Naive thymus-derived CD4-positive, alpha-beta T cell (primary cell): ENCODE measurements at regions of chr1 and their contacts with region 1.

Region 1: GRCh38 chr1:77683160-77684148 is 996 bp upstream of the ZZZ3 start:
- DNase-seq: peak; percentile 83 to 94 (median 92)
- ATAC-seq: peak; percentile 86
- H3K4me3 ChIP-seq: peak overlapping the region; percentile 91
- H3K4me3 Mint-ChIP-seq: peak overlapping the region; percentile 80 to 97 (median 91)
- H3K27ac ChIP-seq: peak overlapping the region; percentile 92
- H3K27ac Mint-ChIP-seq: peak overlapping the region; percentile 89 to 100 (median 97)
- H3K4me1 ChIP-seq: peaks cover 15 to 33% of the 10 kb centered on the region in 2 donors
- H3K4me1 Mint-ChIP-seq: peaks cover 20 to 51% (median 40%) of the 10 kb centered on the region in 7 donors
- H3K27me3 ChIP-seq: no peaks in the 10 kb centered on the region
- H3K27me3 Mint-ChIP-seq: no peaks in the 10 kb centered on the region

Region 2: DNA sequence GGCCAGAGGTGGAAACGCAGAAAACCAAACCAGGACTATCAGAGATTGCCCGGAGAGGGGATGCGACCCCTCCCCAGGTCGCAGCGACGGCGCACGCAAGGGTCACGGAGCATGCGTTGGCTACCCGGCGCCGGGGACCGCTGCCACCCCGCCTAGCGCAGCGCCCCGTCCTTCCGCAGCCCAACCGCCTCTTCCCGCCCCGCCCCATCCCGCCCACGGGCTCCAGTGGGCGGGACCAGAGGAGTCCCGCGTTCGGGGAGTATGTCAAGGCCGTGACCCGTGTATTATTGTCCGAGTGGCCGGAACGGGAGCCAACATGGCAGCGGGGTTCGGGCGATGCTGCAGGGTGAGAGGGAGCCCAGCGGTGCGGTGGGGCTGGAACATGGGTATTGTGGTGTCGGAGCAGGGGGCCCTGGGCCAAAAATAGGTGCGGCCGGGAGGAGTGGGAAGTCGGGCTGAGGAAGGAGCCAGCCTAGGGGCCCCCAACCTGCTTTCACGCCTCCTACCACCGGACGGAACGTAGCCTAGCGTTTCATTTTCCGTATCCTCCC is 1958.9 kb before region 1 on chr1 and contains the start of gene ACADM:
- CTCF ChIA-PET with region 1: no interaction called
- POLR2A ChIA-PET with region 1: no interaction called
- intact Hi-C with region 1: loop called (anchors 1 to 2 kb)
- DNase-seq: peak; percentile 68 to 93 (median 79)
- ATAC-seq: peak; percentile 98
- H3K4me3 ChIP-seq: peak within 1 kb of the TSS; percentile 92
- H3K4me3 Mint-ChIP-seq: peak within 1 kb of the TSS; percentile 94 to 100 (median 98)
- H3K27ac ChIP-seq: peak within 1 kb of the TSS; percentile 89
- H3K27ac Mint-ChIP-seq: peak within 1 kb of the TSS; percentile 92 to 99 (median 97)
- H3K4me1 ChIP-seq: peaks cover 5 to 12% of the 10 kb centered on the region in 2 donors
- H3K4me1 Mint-ChIP-seq: peaks cover 29 to 75% (median 64%) of the 10 kb centered on the region in 7 donors
- H3K27me3 ChIP-seq: no peaks in the 10 kb centered on the region
- H3K27me3 Mint-ChIP-seq: peaks cover 0 to 2% (median 0%) of the 10 kb centered on the region in 5 donors
- total RNA-seq, gene ACADM: 11.1 to 36.4 (median 32.9) TPM

Region 3: GRCh38 chr1:76285578-76286135 is 1397.8 kb before region 1 on chr1:
- CTCF ChIA-PET with region 1: no interaction called
- POLR2A ChIA-PET with region 1: no interaction called
- intact Hi-C with region 1: loop called in 1 of 2 experiments (anchors 1 kb)
- DNase-seq: peak in 5 of 9 donors; percentile 30 to 51 (median 37)
- ATAC-seq: peak; percentile 54
- H3K4me3 ChIP-seq: no peak overlapping the region
- H3K4me3 Mint-ChIP-seq: peak overlapping the region in 9 of 10 donors; percentile 15 to 75 (median 59)
- H3K27ac ChIP-seq: peak overlapping the region; percentile 6
- H3K27ac Mint-ChIP-seq: peak overlapping the region; percentile 33 to 95 (median 70)
- H3K4me1 ChIP-seq: peaks cover 8 to 54% of the 10 kb centered on the region in 2 donors
- H3K4me1 Mint-ChIP-seq: peaks cover 16 to 92% (median 64%) of the 10 kb centered on the region in 7 donors
- H3K27me3 ChIP-seq: no peaks in the 10 kb centered on the region
- H3K27me3 Mint-ChIP-seq: no peaks in the 10 kb centered on the region

Region 4: GRCh38 chr1:77281491-77282186 is 401.8 kb before region 1 on chr1 and contains the start of gene AK5:
- CTCF ChIA-PET with region 1: no interaction called
- POLR2A ChIA-PET with region 1: interaction called, 9 read pairs
- intact Hi-C with region 1: loop called in 1 of 2 experiments (anchors 1 kb)
- DNase-seq: peak; percentile 32 to 60 (median 53)
- ATAC-seq: peak; percentile 76
- H3K4me3 ChIP-seq: peak within 1 kb of the TSS; percentile 74
- H3K4me3 Mint-ChIP-seq: peak within 1 kb of the TSS; percentile 75 to 95 (median 92)
- H3K27ac ChIP-seq: peak within 1 kb of the TSS; percentile 67
- H3K27ac Mint-ChIP-seq: peak within 1 kb of the TSS in 8 of 9 donors; percentile 76 to 95 (median 84)
- H3K4me1 ChIP-seq: peaks cover 0 to 31% of the 10 kb centered on the region in 2 donors
- H3K4me1 Mint-ChIP-seq: peaks cover 29 to 72% (median 59%) of the 10 kb centered on the region in 7 donors
- H3K27me3 ChIP-seq: no peaks in the 10 kb centered on the region
- H3K27me3 Mint-ChIP-seq: peaks cover 0 to 46% (median 0%) of the 10 kb centered on the region in 5 donors
- total RNA-seq, gene AK5: 1.7 to 59.4 (median 41.0) TPM

Region 5: DNA sequence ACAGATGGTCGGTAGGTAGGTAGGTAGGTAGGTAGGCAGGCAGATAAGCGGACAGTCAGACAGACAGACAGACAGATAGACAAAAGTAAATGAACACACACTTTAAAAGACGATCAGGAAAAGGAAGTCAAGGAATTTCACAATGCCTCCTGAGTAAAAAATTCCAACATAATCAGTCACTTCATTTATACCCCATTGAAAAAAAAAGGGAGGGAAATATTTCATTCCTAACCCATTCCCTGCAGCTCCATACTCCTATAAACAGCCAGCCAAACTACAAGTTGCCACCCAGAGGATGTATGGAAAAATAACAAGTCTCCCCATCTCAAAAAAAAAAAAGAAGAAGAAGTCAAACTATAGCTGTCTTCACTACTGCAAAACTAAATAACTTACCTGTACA is 44.4 kb before region 1 on chr1:
- CTCF ChIA-PET with region 1: interaction called, 3 read pairs
- POLR2A ChIA-PET with region 1: no interaction called
- intact Hi-C with region 1: loop called in 1 of 2 experiments (anchors 5 kb)
- DNase-seq: no peak
- ATAC-seq: no peak
- H3K4me3 ChIP-seq: no peak overlapping the region
- H3K4me3 Mint-ChIP-seq: no peak overlapping the region
- H3K27ac ChIP-seq: no peak overlapping the region
- H3K27ac Mint-ChIP-seq: peak overlapping the region in 3 of 9 donors; percentile 6 to 48 (median 44)
- H3K4me1 ChIP-seq: no peaks in the 10 kb centered on the region
- H3K4me1 Mint-ChIP-seq: peaks cover 8 to 38% (median 26%) of the 10 kb centered on the region in 7 donors
- H3K27me3 ChIP-seq: no peaks in the 10 kb centered on the region
- H3K27me3 Mint-ChIP-seq: no peaks in the 10 kb centered on the region

Region 6: GRCh38 chr1:77978969-77979876 is 295.8 kb after region 1 on chr1 and contains the start of gene FUBP1:
- CTCF ChIA-PET with region 1: no interaction called
- POLR2A ChIA-PET with region 1: interaction called, 19 read pairs
- intact Hi-C with region 1: loop called (anchors 1 kb)
- DNase-seq: peak; percentile 81 to 98 (median 97)
- ATAC-seq: peak; percentile 84
- H3K4me3 ChIP-seq: peak within 1 kb of the TSS; percentile 99
- H3K4me3 Mint-ChIP-seq: no peak within 1 kb of the TSS
- H3K27ac ChIP-seq: peak within 1 kb of the TSS; percentile 97
- H3K27ac Mint-ChIP-seq: no peak within 1 kb of the TSS
- H3K4me1 ChIP-seq: peaks cover 31 to 38% of the 10 kb centered on the region in 2 donors
- H3K4me1 Mint-ChIP-seq: peaks cover 28 to 54% (median 39%) of the 10 kb centered on the region in 7 donors
- H3K27me3 ChIP-seq: no peaks in the 10 kb centered on the region
- H3K27me3 Mint-ChIP-seq: no peaks in the 10 kb centered on the region
- total RNA-seq, gene FUBP1: 182 to 253 (median 224) TPM

Region 7: GRCh38 chr1:78649628-78650027 is 966.2 kb after region 1 on chr1 and contains the start of gene IFI44:
- CTCF ChIA-PET with region 1: no interaction called
- POLR2A ChIA-PET with region 1: interaction called, 3 read pairs
- intact Hi-C with region 1: loop called in 1 of 2 experiments (anchors 10 kb)
- DNase-seq: peak; percentile 22 to 83 (median 79)
- ATAC-seq: peak; percentile 91
- H3K4me3 ChIP-seq: peak within 1 kb of the TSS; percentile 68
- H3K4me3 Mint-ChIP-seq: peak within 1 kb of the TSS; percentile 81 to 100 (median 92)
- H3K27ac ChIP-seq: peak within 1 kb of the TSS; percentile 67
- H3K27ac Mint-ChIP-seq: peak within 1 kb of the TSS; percentile 82 to 97 (median 93)
- H3K4me1 ChIP-seq: peaks cover 36 to 40% of the 10 kb centered on the region in 2 donors
- H3K4me1 Mint-ChIP-seq: peaks cover 39 to 80% (median 64%) of the 10 kb centered on the region in 7 donors
- H3K27me3 ChIP-seq: no peaks in the 10 kb centered on the region
- H3K27me3 Mint-ChIP-seq: no peaks in the 10 kb centered on the region
- total RNA-seq, gene IFI44: 24.3 to 142 (median 33.1) TPM